ENCODE measurements at regions of chr19 and their contacts with region 1.

Region 1: GRCh38 chr19:17784201-17785008 is 10.5 kb upstream of the B3GNT3 start:
- DNase-seq: peak; percentile 36
- ATAC-seq: peak; percentile 95
- H3K4me3 ChIP-seq: no peak overlapping the region
- H3K27ac ChIP-seq: no peak overlapping the region
- H3K4me1 ChIP-seq: no peaks in the 10 kb centered on the region
- H3K27me3 ChIP-seq: peaks cover 2% of the 10 kb centered on the region; the same call in 1 of the 2 replicates
- CTCF ChIP-seq: peak; percentile 69
- POLR2A ChIP-seq: no peak
- RAD21 ChIP-seq: peak; percentile 57

Region 2: GRCh38 chr19:17829855-17830566 is 45.6 kb after region 1 on chr19:
- CTCF ChIA-PET with region 1: no interaction called
- POLR2A ChIA-PET with region 1: no interaction called
- dilution Hi-C with region 1: no loop called
- in situ Hi-C with region 1: no loop called
- intact Hi-C with region 1: loop called (anchors 2 kb)
- DNase-seq: peak; percentile 8
- ATAC-seq: peak; percentile 43
- H3K4me3 ChIP-seq: no peak overlapping the region
- H3K27ac ChIP-seq: no peak overlapping the region
- H3K4me1 ChIP-seq: peaks cover 2% of the 10 kb centered on the region; the same call in 1 of the 2 replicates
- H3K27me3 ChIP-seq: peaks cover 33% of the 10 kb centered on the region
- CTCF ChIP-seq: no peak
- POLR2A ChIP-seq: no peak
- RAD21 ChIP-seq: no peak

Region 3: DNA sequence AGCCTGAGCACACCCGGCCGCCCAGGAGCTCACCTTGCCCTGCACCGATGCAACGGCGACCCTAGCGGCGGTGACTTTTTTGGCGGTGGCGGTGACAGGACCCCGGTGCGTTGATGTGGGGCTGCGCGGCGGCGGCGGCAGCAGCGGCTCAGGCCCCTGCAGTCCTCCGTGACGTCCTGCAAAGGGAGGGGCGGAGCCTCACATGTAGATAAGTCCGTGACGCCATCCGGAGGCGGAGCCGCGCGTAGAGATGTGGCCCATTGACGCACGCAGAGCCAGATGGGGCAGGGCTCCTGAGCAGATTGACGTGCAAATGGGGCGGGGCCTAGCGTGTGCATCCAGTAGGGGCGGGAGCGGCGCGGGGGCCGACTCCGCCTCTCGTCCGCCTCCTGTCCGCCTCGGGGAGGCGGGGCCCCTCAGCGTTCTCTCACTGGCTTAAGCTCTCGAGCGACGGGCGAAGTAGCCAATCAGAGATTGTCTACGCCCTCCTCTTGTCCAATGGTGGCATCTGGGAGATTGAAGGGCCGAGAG is 419.5 kb after region 1 on chr19 and contains the start of gene RAB3A:
- CTCF ChIA-PET with region 1: no interaction called
- POLR2A ChIA-PET with region 1: no interaction called
- dilution Hi-C with region 1: no loop called
- in situ Hi-C with region 1: no loop called
- intact Hi-C with region 1: no loop called
- DNase-seq: peak; percentile 100
- ATAC-seq: peak; percentile 87
- H3K4me3 ChIP-seq: peak within 1 kb of the TSS; percentile 75
- H3K27ac ChIP-seq: peak within 1 kb of the TSS; percentile 93
- H3K4me1 ChIP-seq: peaks cover 16% of the 10 kb centered on the region
- H3K27me3 ChIP-seq: no peaks in the 10 kb centered on the region
- CTCF ChIP-seq: no peak
- POLR2A ChIP-seq: peak; percentile 70
- RAD21 ChIP-seq: no peak
- total RNA-seq, gene RAB3A: 2.8 and 3.0 TPM in 2 replicates

Region 4: DNA sequence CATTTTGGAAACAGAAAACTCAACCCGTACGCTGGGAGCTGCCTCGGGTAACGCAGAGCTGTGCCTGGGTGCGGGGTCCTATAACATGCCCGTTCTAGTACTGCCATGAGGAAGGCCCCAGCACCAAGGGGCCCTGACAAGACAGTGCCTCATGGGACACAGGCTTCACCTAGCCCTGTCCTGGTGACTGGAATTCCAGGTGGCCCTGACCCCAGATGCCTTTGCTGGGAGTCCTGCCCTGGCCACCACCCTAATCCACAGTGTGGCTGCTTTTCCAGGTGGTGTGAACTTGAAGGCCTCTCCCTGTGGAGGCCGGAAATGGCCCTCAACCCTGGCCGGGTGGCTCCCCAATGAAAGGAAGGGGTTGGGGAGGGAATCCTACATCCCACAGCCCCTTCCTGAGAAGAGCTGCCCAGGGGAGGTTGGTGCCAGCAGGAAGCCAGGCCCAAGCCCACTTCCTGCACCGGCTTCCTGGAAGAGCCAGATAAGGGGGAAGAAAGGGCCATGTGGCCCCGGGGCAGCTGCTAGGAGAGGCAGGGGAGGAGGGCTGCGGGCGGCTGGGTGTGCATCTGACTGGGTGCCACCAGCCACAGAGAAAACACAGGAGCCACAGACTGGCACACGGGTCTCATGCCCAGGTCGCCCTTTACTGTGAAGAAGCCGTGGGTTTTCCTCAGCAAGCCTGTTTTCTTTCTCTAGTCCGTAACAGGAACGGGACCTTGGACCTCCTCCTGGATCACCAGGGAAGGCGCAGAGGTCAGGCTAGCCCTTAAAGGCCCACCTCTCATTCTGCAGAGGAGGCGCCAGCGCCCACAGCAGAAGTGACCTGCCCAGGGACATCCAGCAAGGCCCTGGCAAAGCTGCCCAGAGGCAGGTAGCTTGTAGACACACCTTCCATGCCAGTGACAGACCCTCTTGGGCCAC is 533.8 kb after region 1 on chr19:
- CTCF ChIA-PET with region 1: no interaction called
- POLR2A ChIA-PET with region 1: no interaction called
- dilution Hi-C with region 1: no loop called
- in situ Hi-C with region 1: no loop called
- intact Hi-C with region 1: no loop called
- DNase-seq: no peak
- ATAC-seq: no peak
- H3K4me3 ChIP-seq: no peak overlapping the region
- H3K27ac ChIP-seq: no peak overlapping the region
- H3K4me1 ChIP-seq: peaks cover 5% of the 10 kb centered on the region; the same call in 1 of the 2 replicates
- H3K27me3 ChIP-seq: no peaks in the 10 kb centered on the region
- CTCF ChIP-seq: no peak
- POLR2A ChIP-seq: no peak
- RAD21 ChIP-seq: no peak